Dendritic cell treated with granulocyte-macrophage colony-stimulating factor and Interleukin-4, amounts not matched to agents 40 ng/mL and 50 ng/mL, for 4 days (primary cell): ENCODE measurements at regions of chr2 and their contacts with region 1.

Region 1: DNA sequence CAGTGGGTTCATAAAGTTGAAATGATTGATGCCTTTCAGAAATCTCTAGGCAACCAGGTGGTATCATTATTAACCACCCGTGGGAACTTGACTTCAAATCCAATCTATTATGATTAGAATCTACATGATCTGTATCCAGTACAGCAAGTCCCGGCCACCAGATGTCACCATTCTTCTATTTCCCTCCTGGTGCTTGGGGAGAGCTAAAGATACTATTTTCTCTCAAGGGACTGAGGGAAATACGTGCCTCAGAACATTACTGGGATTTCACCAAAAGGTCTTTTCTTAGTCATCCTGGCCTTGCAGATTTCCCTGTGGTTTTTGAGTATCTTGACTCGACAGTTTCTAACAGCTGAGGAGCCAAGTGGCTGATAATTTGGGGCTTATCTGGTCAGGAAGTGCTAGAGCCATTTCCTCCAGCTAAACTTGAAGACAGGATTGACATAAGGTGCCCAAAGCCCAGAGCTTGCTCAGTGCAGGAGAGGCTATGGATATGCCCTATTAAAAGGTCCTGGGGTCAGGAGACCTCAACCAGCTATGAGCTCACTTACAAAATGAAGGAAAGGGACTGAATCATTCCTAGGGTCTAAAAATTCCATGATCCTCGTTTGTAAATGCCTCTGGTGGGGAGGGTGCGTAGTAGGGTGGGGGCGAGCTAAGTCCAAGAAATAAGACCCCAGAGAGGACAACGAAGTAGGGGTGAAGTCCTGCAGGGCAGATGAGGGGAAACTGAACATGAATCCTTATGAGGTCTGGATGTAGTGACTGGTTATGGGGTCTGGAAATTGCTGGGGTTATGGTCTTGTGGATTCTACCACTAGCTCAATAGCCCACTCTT is 135.4 kb upstream of the MGAT5 start:
- H3K4me3 Mint-ChIP-seq: peak overlapping the region; percentile 94
- H3K27ac Mint-ChIP-seq: peak overlapping the region; percentile 87
- H3K4me1 Mint-ChIP-seq: peaks cover 37% of the 10 kb centered on the region
- H3K27me3 Mint-ChIP-seq: no peaks in the 10 kb centered on the region

Region 2: GRCh38 chr2:134155134-134155533 is 36.6 kb after region 1 on chr2:
- intact Hi-C with region 1: loop called (anchors 5 kb)
- H3K4me3 Mint-ChIP-seq: no peak overlapping the region
- H3K27ac Mint-ChIP-seq: peak overlapping the region; percentile 79
- H3K4me1 Mint-ChIP-seq: peaks cover 88% of the 10 kb centered on the region
- H3K27me3 Mint-ChIP-seq: no peaks in the 10 kb centered on the region

Region 3: GRCh38 chr2:134207564-134208209 is 89.2 kb after region 1 on chr2:
- intact Hi-C with region 1: loop called (anchors 5 kb)
- H3K4me3 Mint-ChIP-seq: no peak overlapping the region
- H3K27ac Mint-ChIP-seq: no peak overlapping the region
- H3K4me1 Mint-ChIP-seq: peaks cover 6% of the 10 kb centered on the region
- H3K27me3 Mint-ChIP-seq: no peaks in the 10 kb centered on the region

Region 4: DNA sequence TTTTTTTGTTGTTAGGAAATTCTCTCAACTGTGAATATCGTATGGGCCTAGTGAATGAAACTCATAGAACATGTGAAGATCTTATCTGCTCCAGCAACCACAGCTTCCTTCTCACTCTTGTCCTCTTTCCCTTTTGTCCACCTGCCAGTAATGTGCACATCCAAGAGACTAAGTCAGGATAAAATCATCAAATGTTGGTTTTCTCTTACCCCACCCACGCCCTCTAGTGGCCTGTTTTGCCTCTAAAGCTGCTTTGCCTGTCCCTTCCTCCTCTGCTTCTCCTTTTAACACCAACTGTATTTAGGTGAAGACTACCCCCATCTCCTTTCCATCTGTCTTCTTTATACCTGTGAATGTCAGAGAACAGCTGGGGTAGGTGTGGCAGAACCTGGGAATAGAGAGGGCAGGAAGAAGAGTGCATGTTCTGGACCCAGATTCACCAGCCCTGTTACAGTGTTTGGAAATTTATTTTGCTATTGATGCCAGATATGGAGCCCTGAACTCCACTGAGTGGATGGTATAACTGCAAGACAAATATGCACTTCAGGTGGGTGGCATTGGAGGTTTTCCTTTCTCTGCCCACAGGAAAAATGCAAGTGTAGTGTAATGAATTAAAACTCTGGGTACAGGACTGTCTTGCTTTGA is 127.0 kb after region 1 on chr2:
- intact Hi-C with region 1: loop called (anchors 1 kb)
- H3K4me3 Mint-ChIP-seq: no peak overlapping the region
- H3K27ac Mint-ChIP-seq: no peak overlapping the region
- H3K4me1 Mint-ChIP-seq: peaks cover 57% of the 10 kb centered on the region
- H3K27me3 Mint-ChIP-seq: no peaks in the 10 kb centered on the region

Region 5: DNA sequence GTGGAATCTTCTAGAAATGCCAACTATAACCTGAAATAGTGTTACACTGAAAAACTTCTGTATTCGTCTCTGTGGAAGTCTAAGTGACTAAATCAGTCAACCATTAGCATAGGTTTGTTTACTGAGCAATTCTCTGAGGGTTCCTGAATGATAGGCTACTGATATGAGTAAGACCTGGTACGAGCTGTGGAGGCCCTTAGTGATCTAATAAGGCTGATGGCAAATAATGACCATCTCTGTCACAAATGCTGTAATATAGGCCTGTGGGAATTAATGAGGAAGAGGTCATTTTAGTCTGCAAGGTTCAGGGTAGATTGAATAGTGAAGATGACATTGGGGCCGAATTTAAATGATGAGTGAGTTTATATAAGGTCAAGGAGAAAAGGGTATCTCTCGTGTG is 217.9 kb after region 1 on chr2:
- intact Hi-C with region 1: loop called (anchors 5 kb)
- H3K4me3 Mint-ChIP-seq: no peak overlapping the region
- H3K27ac Mint-ChIP-seq: peak overlapping the region; percentile 80
- H3K4me1 Mint-ChIP-seq: peaks cover 23% of the 10 kb centered on the region
- H3K27me3 Mint-ChIP-seq: no peaks in the 10 kb centered on the region

Region 6: DNA sequence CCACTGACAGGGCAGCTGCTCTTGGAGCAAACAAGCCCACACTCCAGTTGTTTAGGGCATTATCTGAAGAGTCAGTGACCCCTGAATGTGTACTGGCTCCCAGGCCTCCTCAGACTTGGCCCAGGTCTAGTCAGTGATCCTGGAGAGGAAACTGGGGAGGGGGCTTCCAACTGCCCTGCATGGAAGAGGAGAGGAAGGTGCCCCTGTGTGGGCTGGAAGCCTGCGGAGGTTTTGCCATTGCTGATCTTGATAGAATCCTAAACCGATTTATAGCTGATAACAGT is 332.8 kb after region 1 on chr2:
- intact Hi-C with region 1: loop called (anchors 1 kb)
- H3K4me3 Mint-ChIP-seq: no peak overlapping the region
- H3K27ac Mint-ChIP-seq: no peak overlapping the region
- H3K4me1 Mint-ChIP-seq: no peaks in the 10 kb centered on the region
- H3K27me3 Mint-ChIP-seq: no peaks in the 10 kb centered on the region

Region 7: GRCh38 chr2:134897932-134898331 is 779.4 kb after region 1 on chr2:
- intact Hi-C with region 1: loop called (anchors 5 kb)
- H3K4me3 Mint-ChIP-seq: no peak overlapping the region
- H3K27ac Mint-ChIP-seq: no peak overlapping the region
- H3K4me1 Mint-ChIP-seq: peaks cover under 1% of the 10 kb centered on the region
- H3K27me3 Mint-ChIP-seq: no peaks in the 10 kb centered on the region